Natural killer cell (primary cell): ENCODE measurements at regions of chr6 and their contacts with region 1.

Region 1: GRCh38 chr6:117976030-117976651 is 69.1 kb downstream of the SLC35F1 start:
- DNase-seq: peak in 1 of 2 donors; percentile 59
- ATAC-seq: no peak
- H3K4me3 ChIP-seq: no peak overlapping the region
- H3K4me3 Mint-ChIP-seq: no peak overlapping the region
- H3K27ac ChIP-seq: no peak overlapping the region
- H3K27ac Mint-ChIP-seq: no peak overlapping the region
- H3K4me1 ChIP-seq: no peaks in the 10 kb centered on the region
- H3K4me1 Mint-ChIP-seq: no peaks in the 10 kb centered on the region
- H3K27me3 ChIP-seq: no peaks in the 10 kb centered on the region
- H3K27me3 Mint-ChIP-seq: peaks cover 9 to 15% of the 10 kb centered on the region in 2 donors
- CTCF ChIP-seq: peak; percentile 47

Region 2: DNA sequence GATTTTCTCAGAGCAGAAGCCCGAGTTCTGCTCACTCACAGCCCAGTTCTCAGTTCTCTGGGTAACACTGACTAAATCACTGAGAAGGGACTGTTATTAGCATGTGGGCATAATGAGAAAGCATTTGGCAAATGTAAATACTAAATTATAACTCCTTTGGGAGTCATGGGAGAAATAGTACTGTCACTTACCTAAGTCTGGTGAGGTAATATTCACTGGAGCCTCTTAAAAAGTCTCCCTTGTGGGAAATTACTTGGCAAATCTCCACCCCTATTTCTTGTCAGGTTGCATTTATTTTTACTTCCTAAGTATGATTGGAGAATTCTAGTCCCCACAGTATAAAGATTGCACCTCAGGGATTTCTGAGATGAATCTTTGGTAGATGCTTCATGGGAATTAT is 185.2 kb after region 1 on chr6:
- intact Hi-C with region 1: no loop called
- DNase-seq: no peak
- ATAC-seq: no peak
- H3K4me3 ChIP-seq: no peak overlapping the region
- H3K4me3 Mint-ChIP-seq: no peak overlapping the region
- H3K27ac ChIP-seq: no peak overlapping the region
- H3K27ac Mint-ChIP-seq: no peak overlapping the region
- H3K4me1 ChIP-seq: no peaks in the 10 kb centered on the region
- H3K4me1 Mint-ChIP-seq: no peaks in the 10 kb centered on the region
- H3K27me3 ChIP-seq: no peaks in the 10 kb centered on the region
- H3K27me3 Mint-ChIP-seq: peaks cover 0 to 5% of the 10 kb centered on the region in 2 donors
- CTCF ChIP-seq: no peak

Region 3: DNA sequence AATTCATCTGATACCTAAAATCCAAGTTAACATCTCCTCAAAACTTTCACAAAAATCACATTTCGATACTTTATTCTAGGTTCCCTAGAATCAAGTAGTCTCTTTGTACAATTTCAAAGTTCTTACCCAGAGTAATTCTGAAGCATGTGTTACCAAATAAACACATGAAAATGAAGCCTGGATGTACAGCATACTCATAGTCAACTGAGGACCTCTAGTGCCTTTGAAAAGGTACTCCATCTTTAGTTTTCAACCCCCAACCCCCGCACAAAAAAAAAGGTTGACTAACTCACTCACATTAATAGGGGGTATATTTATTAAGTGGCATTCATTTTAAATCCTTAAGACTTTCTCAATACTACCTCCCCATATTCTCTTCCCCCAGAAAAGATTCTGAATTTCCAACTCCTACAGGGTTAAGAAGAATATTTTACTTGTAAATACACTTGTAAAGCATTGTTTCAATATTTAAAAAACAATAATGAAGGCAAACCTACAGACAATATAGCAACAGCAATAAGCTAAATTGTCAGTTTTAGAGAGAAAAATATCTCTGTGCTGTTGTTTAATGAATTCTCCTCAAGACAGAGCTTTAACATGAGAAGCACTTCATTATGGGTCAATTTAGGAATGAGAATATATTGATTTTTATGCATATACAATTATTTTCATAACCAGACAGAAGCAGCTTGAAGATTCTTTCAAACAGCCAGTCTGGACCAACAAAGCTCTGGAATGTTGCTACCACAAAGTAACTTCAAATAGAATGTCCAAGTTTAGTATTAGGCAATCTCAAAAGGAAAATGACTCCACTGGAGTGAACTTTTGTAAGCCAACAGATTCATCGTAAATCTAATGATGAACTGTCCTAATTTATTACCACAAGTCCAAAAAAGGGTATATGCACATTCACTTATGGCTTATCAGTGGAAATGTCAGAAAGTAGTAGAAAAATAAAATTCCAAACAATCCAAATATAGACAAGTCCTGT is 575.2 kb after region 1 on chr6:
- intact Hi-C with region 1: loop called (anchors 5 kb)
- DNase-seq: peak in 1 of 2 donors; percentile 72
- ATAC-seq: peak; percentile 75 to 94 (median 91)
- H3K4me3 ChIP-seq: no peak overlapping the region
- H3K4me3 Mint-ChIP-seq: no peak overlapping the region
- H3K27ac ChIP-seq: no peak overlapping the region
- H3K27ac Mint-ChIP-seq: peak overlapping the region in 1 of 2 donors; percentile 80
- H3K4me1 ChIP-seq: no peaks in the 10 kb centered on the region
- H3K4me1 Mint-ChIP-seq: peaks cover 19 to 25% of the 10 kb centered on the region in 2 donors
- H3K27me3 ChIP-seq: no peaks in the 10 kb centered on the region
- H3K27me3 Mint-ChIP-seq: no peaks in the 10 kb centered on the region
- CTCF ChIP-seq: peak; percentile 70

Region 4: DNA sequence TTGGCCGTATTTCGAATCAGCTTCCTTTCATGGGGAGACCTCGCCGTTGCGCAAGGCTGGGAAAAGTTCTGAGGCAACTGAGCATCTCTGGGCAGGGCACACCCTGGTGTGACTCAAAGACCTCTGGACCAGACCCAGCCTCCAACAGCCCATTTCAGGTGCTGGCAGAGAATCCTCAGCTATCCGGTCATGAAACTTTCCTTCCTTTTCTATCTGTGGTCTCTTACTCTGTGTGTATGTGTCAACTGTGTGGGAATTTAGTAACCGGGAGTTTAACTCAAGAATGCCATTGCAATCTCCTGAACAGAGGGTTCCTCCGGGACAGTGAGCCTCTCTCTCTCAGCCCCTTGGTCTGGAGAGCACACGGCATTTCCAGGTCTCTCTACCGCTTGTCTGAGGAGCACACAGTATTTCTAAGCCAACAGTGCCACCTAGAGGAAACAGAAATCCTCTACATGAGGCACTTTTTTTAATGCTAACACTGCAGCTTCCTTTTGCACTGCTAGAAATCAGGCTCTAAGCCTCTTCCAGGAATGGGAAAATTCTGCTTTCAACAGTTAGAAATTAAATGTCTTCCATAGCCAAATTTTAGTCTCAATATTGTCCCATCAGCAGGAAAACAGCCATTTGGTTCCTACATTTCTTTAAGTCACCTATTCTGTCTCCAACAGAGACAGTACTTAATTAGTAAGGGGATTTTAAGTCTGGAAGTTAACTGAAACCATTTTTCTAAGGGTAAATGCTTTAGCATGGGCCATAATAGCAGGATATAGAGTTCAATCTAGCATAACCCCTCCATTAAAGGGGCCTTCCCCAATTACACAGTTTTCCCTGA is 604.7 kb after region 1 on chr6:
- intact Hi-C with region 1: loop called (anchors 1 kb)
- DNase-seq: peak in 1 of 2 donors; percentile 77
- ATAC-seq: peak; percentile 79 to 92 (median 80)
- H3K4me3 ChIP-seq: no peak overlapping the region
- H3K4me3 Mint-ChIP-seq: peak overlapping the region; percentile 26
- H3K27ac ChIP-seq: no peak overlapping the region
- H3K27ac Mint-ChIP-seq: peak overlapping the region; percentile 28 to 72
- H3K4me1 ChIP-seq: peaks cover 5% of the 10 kb centered on the region
- H3K4me1 Mint-ChIP-seq: peaks cover 17 to 34% of the 10 kb centered on the region in 2 donors
- H3K27me3 ChIP-seq: no peaks in the 10 kb centered on the region
- H3K27me3 Mint-ChIP-seq: no peaks in the 10 kb centered on the region
- CTCF ChIP-seq: peak; percentile 71

Region 5: GRCh38 chr6:118618679-118619377 is 642.7 kb after region 1 on chr6:
- intact Hi-C with region 1: loop called (anchors 1 kb)
- DNase-seq: peak; percentile 56 to 79
- ATAC-seq: peak; percentile 81 to 98 (median 95)
- H3K4me3 ChIP-seq: no peak overlapping the region
- H3K4me3 Mint-ChIP-seq: no peak overlapping the region
- H3K27ac ChIP-seq: no peak overlapping the region
- H3K27ac Mint-ChIP-seq: peak overlapping the region in 1 of 2 donors; percentile 21
- H3K4me1 ChIP-seq: peaks cover 6% of the 10 kb centered on the region
- H3K4me1 Mint-ChIP-seq: peaks cover 47 to 56% of the 10 kb centered on the region in 2 donors
- H3K27me3 ChIP-seq: no peaks in the 10 kb centered on the region
- H3K27me3 Mint-ChIP-seq: no peaks in the 10 kb centered on the region
- CTCF ChIP-seq: peak; percentile 75

Region 6: GRCh38 chr6:118800394-118801071 is 824.4 kb after region 1 on chr6:
- intact Hi-C with region 1: loop called (anchors 2 kb)
- DNase-seq: peak; percentile 60 to 92
- ATAC-seq: peak; percentile 93 to 97 (median 95)
- H3K4me3 ChIP-seq: no peak overlapping the region
- H3K4me3 Mint-ChIP-seq: peak overlapping the region; percentile 71
- H3K27ac ChIP-seq: no peak overlapping the region
- H3K27ac Mint-ChIP-seq: peak overlapping the region; percentile 51 to 57
- H3K4me1 ChIP-seq: peaks cover 18% of the 10 kb centered on the region
- H3K4me1 Mint-ChIP-seq: peaks cover 16 to 21% of the 10 kb centered on the region in 2 donors
- H3K27me3 ChIP-seq: no peaks in the 10 kb centered on the region
- H3K27me3 Mint-ChIP-seq: no peaks in the 10 kb centered on the region
- CTCF ChIP-seq: peak; percentile 84